ENCODE measurements at regions of chr15 and their contacts with region 1.

Region 1: GRCh38 chr15:55221090-55222011 is 24.6 kb upstream of the RSL24D1 start:
- DNase-seq: peak; percentile 86
- ATAC-seq: peak; percentile 92
- H3K4me3 ChIP-seq: no peak overlapping the region
- H3K27ac ChIP-seq: peak overlapping the region; percentile 39
- H3K4me1 ChIP-seq: peaks cover 25% of the 10 kb centered on the region
- H3K27me3 ChIP-seq: no peaks in the 10 kb centered on the region
- CTCF ChIP-seq: 0 out of 2 replicates have a peak, but pooled peaks have one; percentile 3
- EP300 ChIP-seq: peak; percentile 49 to 79; a peak in 2 of 4 replicates
- POLR2A ChIP-seq: no peak
- RAD21 ChIP-seq: no peak

Region 2: DNA sequence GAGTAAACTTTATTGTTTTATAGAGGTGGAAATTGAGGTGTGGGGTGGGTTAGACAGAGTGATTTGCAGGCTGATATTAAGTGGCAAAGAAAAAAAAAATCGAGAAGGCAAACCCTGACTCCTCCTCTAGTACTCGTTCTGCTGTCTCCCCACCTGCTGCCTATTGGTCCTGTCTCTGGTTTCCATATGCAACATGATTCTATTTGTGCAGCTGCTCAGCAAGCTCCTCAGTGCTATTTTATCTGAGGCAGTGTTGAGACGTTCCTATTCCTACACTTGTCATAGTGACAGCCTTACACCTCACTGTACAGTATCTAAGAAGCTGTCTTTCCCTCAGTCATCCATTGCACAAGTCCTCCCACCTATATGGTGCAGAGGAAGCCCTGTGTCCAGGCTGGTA is 69.7 kb before region 1 on chr15:
- CTCF ChIA-PET with region 1: no interaction called
- POLR2A ChIA-PET with region 1: no interaction called
- in situ Hi-C with region 1: no loop called
- intact Hi-C with region 1: loop called (anchors 1 kb)
- DNase-seq: no peak
- ATAC-seq: no peak
- H3K4me3 ChIP-seq: no peak overlapping the region
- H3K27ac ChIP-seq: no peak overlapping the region
- H3K4me1 ChIP-seq: no peaks in the 10 kb centered on the region
- H3K27me3 ChIP-seq: no peaks in the 10 kb centered on the region; a peak in 1 of 5 replicates
- CTCF ChIP-seq: no peak
- EP300 ChIP-seq: no peak
- POLR2A ChIP-seq: no peak
- RAD21 ChIP-seq: no peak

Region 3: DNA sequence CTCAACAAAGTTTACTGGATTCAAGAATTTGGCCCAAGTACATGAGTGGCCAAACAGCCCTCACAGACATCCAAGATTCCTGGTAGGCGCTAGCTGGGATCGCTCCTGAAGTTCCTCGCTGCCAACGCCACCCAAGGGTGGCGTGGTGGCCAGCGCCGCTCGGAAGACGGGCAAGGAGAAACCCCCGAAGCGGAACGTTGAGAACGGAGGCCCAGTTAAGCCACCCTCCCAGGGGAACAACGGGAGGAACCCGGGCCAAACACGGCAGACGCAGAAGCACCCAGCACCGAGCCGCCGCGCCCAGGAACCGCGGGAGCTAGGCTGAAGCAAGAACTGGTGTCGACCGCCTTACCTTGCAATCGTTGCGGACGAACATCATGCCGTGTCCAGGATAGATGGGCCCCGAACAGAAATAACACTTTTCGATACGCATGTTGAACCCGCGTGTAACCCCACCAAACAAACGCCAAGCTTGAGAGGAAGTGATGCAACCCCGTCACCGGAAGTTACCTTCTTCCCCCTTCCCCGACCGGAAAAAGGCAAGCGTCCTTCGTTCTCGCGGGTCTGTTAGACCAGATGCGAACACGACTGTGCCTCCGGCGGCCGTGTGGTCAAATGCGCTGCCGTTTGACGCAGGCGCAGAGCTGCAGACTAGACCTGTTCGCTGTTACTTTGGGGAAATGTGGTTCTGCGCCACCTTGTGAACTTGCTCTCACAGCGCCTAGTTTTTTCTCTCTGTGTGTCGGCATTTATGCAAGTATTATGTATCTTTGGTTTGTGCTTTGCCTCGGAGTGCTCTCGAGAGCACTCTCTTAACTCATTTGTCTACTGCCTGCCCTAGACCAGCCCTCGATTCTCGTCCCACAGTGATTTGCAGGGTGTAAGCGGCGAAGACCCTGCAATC is 24.6 kb before region 1 on chr15 and contains the start of gene RSL24D1:
- CTCF ChIA-PET with region 1: no interaction called
- POLR2A ChIA-PET with region 1: interaction called, 7 read pairs
- in situ Hi-C with region 1: no loop called
- intact Hi-C with region 1: loop called (anchors 2 kb)
- DNase-seq: peak; percentile 98
- ATAC-seq: peak; percentile 99
- H3K4me3 ChIP-seq: peak within 1 kb of the TSS; percentile 66 to 91 (median 85)
- H3K27ac ChIP-seq: peak within 1 kb of the TSS; percentile 89
- H3K4me1 ChIP-seq: peaks cover 36% of the 10 kb centered on the region
- H3K27me3 ChIP-seq: no peaks in the 10 kb centered on the region; a peak in 1 of 5 replicates
- CTCF ChIP-seq: peak; percentile 68
- EP300 ChIP-seq: peak in 1 of 2 experiments; percentile 26; a peak in 1 of 4 replicates
- POLR2A ChIP-seq: peak; percentile 86 to 94
- RAD21 ChIP-seq: no peak
- total RNA-seq, gene RSL24D1: 100.0 and 153 TPM in 2 replicates

Region 4: DNA sequence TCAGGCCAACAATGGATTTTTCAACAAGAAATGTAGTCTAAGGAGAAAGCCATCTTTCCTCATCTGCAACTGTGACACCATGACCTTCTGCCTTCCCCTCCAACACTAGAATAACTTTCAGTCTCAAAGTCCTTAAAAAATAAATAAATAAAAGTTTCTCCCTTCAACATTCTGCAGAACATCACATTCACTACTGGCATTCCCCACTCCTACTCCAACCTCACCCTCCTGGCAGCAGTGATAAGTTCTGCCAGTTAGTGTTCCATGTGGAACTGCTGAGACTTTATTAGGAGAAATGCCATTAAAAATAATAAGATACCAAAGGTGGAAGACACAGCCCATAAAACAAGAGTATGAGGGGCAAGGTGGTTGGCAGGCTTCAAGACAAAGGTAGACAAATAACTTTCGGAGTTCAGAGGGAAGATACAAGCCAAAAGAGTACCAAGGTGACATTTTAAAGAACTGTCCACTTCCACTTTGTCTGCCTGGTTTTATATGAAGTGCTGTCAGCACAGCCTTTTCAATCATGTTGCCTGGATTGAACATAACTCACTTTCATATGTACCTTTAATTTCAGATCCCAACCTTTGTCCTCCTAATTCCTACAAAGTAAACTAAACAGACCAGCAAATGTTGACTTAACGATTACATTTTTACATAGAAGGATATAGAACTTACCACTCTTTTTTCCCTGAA is 12.9 kb after region 1 on chr15:
- CTCF ChIA-PET with region 1: no interaction called
- POLR2A ChIA-PET with region 1: interaction called, 3 read pairs
- in situ Hi-C with region 1: no loop called
- intact Hi-C with region 1: loop called (anchors 2 kb)
- DNase-seq: peak; percentile 71
- ATAC-seq: peak; percentile 75
- H3K4me3 ChIP-seq: peak overlapping the region in 2 of 3 experiments; percentile 7 to 10; a peak in 1 of 6 replicates
- H3K27ac ChIP-seq: peak overlapping the region; percentile 58
- H3K4me1 ChIP-seq: peaks cover 26% of the 10 kb centered on the region
- H3K27me3 ChIP-seq: no peaks in the 10 kb centered on the region
- CTCF ChIP-seq: no peak
- EP300 ChIP-seq: no peak; a peak in 1 of 4 replicates
- POLR2A ChIP-seq: no peak
- RAD21 ChIP-seq: no peak

Region 5: DNA sequence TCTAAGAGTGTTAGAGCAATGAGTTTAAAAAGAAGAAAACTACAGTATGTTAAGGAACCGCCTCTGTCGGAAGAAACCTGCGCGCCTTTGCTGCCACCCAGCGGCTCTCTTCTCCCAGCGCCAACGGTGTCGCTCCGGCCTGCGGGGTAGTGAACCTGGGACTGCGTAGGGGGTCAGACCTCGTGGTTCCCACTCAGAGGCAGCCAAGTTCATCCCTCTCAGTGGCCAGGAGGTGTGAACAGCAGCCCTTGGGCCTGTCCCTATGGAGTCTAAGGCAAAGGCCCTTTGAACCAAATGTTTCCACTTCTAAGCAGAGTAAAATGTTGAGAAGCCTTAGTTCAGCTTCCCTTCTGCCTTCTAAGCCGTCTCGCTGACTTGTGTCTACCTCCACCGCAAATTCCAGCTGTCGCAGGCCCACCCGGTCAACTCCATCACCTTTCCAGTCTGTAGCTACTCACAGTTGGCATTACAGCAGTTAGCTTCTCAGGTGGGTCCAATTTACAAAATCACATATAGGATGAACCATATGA is 69.2 kb after region 1 on chr15:
- CTCF ChIA-PET with region 1: interaction called, 66 read pairs
- POLR2A ChIA-PET with region 1: interaction called, 3 read pairs
- in situ Hi-C with region 1: loop called (anchors 5 kb)
- intact Hi-C with region 1: loop called (anchors 1 kb)
- DNase-seq: peak; percentile 71
- ATAC-seq: peak; percentile 90
- H3K4me3 ChIP-seq: peak overlapping the region; percentile 80 to 82 (median 81)
- H3K27ac ChIP-seq: peak overlapping the region; percentile 62
- H3K4me1 ChIP-seq: peaks cover 16% of the 10 kb centered on the region
- H3K27me3 ChIP-seq: no peaks in the 10 kb centered on the region; a peak in 1 of 5 replicates
- CTCF ChIP-seq: peak; percentile 92
- EP300 ChIP-seq: no peak
- POLR2A ChIP-seq: no peak
- RAD21 ChIP-seq: peak; percentile 87

Region 6: GRCh38 chr15:55434989-55435825 is 213.9 kb after region 1 on chr15:
- CTCF ChIA-PET with region 1: interaction called, 10 read pairs
- POLR2A ChIA-PET with region 1: no interaction called
- in situ Hi-C with region 1: loop called (anchors 10 kb)
- intact Hi-C with region 1: loop called (anchors 1 kb)
- DNase-seq: peak; percentile 54
- ATAC-seq: peak; percentile 92
- H3K4me3 ChIP-seq: no peak overlapping the region
- H3K27ac ChIP-seq: no peak overlapping the region
- H3K4me1 ChIP-seq: no peaks in the 10 kb centered on the region
- H3K27me3 ChIP-seq: no peaks in the 10 kb centered on the region
- CTCF ChIP-seq: peak; percentile 70
- EP300 ChIP-seq: no peak
- POLR2A ChIP-seq: no peak
- RAD21 ChIP-seq: peak; percentile 46; the same call in 1 of the 2 replicates

Measured in HepG2 (cell line).